ENCODE measurements at regions of chr9 and their contacts with region 1.

Region 1: GRCh38 chr9:124812401-124813016 is 35.6 kb downstream of the OLFML2A start:
- DNase-seq: no peak
- ATAC-seq: no peak
- H3K4me3 Mint-ChIP-seq: no peak overlapping the region
- H3K27ac Mint-ChIP-seq: no peak overlapping the region
- H3K4me1 Mint-ChIP-seq: peaks cover 36% of the 10 kb centered on the region
- H3K27me3 Mint-ChIP-seq: no peaks in the 10 kb centered on the region
- CTCF ChIP-seq: no peak

Region 2: GRCh38 chr9:124800306-124801259 is 11.9 kb before region 1 on chr9:
- CTCF ChIA-PET with region 1: interaction called, 16 read pairs
- POLR2A ChIA-PET with region 1: no interaction called
- DNase-seq: no peak
- ATAC-seq: no peak
- H3K4me3 Mint-ChIP-seq: no peak overlapping the region
- H3K27ac Mint-ChIP-seq: peak overlapping the region; percentile 60; the same call in 1 of the 2 replicates
- H3K4me1 Mint-ChIP-seq: 0 out of 2 replicates have a peak, but pooled peaks cover 4% of the 10 kb centered on the region
- H3K27me3 Mint-ChIP-seq: no peaks in the 10 kb centered on the region
- CTCF ChIP-seq: no peak

Region 3: GRCh38 chr9:124975131-124975530 is 162.6 kb after region 1 on chr9:
- CTCF ChIA-PET with region 1: no interaction called
- POLR2A ChIA-PET with region 1: no interaction called
- DNase-seq: no peak
- ATAC-seq: peak; percentile 87
- H3K4me3 Mint-ChIP-seq: no peak overlapping the region
- H3K27ac Mint-ChIP-seq: peak overlapping the region; percentile 44
- H3K4me1 Mint-ChIP-seq: peaks cover 13% of the 10 kb centered on the region
- H3K27me3 Mint-ChIP-seq: no peaks in the 10 kb centered on the region
- CTCF ChIP-seq: no peak